ENCODE measurements at regions of chr9 and their contacts with region 1.

Region 1: GRCh38 chr9:2053883-2054845 is 39.0 kb downstream of the SMARCA2 start:
- DNase-seq: peak; percentile 88
- H3K4me3 Mint-ChIP-seq: peak overlapping the region; percentile 34
- H3K27ac Mint-ChIP-seq: peak overlapping the region; percentile 83
- H3K4me1 Mint-ChIP-seq: peaks cover 46% of the 10 kb centered on the region
- H3K27me3 Mint-ChIP-seq: no peaks in the 10 kb centered on the region

Region 2: GRCh38 chr9:1683951-1684350 is 370.2 kb before region 1 on chr9:
- CTCF ChIA-PET with region 1: no interaction called
- POLR2A ChIA-PET with region 1: no interaction called
- intact Hi-C with region 1: no loop called
- DNase-seq: no peak
- H3K4me3 Mint-ChIP-seq: no peak overlapping the region
- H3K27ac Mint-ChIP-seq: no peak overlapping the region
- H3K4me1 Mint-ChIP-seq: no peaks in the 10 kb centered on the region
- H3K27me3 Mint-ChIP-seq: peaks cover 11% of the 10 kb centered on the region

Region 3: DNA sequence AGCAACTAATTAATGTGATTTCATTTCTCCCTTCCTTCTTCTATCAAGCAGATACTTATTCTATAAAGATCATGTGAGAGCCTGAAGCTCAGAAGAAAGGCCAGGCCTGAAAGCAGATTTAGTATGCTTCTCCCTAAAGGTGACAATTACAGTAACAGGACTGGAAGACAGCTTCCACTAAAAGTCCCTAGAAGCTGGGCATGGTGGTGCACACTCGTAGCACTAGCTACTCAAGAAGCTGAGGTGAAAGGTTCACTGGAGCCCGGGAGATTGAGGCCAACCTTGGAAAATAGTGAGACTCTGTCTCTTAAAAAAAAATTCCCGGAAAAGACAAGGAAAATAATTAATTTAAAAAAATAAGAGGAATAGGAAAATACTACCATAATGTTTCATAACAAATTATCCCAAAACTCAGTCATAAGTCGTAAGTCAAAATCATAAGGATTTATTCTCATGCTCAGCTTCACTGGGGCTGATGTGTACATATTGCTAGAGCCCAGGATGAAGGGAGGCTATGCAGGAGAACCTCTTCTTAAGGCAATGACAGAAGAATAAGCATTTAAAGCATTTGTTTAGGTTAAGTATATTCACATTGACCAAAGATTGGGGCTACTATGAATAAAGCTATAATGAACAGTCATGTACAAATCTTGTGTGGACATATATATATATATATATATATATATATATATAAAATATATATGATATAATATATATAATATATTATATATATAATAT is 249.9 kb before region 1 on chr9:
- CTCF ChIA-PET with region 1: no interaction called
- POLR2A ChIA-PET with region 1: no interaction called
- intact Hi-C with region 1: loop called (anchors 5 kb)
- DNase-seq: no peak
- H3K4me3 Mint-ChIP-seq: no peak overlapping the region
- H3K27ac Mint-ChIP-seq: peak overlapping the region; percentile 31
- H3K4me1 Mint-ChIP-seq: peaks cover 7% of the 10 kb centered on the region
- H3K27me3 Mint-ChIP-seq: peaks cover 2% of the 10 kb centered on the region

Region 4: GRCh38 chr9:2014696-2015580 is 39.2 kb before region 1 on chr9 and contains the start of gene SMARCA2:
- CTCF ChIA-PET with region 1: interaction called, 5 read pairs
- POLR2A ChIA-PET with region 1: interaction called, 52 read pairs
- intact Hi-C with region 1: loop called (anchors 1 kb)
- DNase-seq: peak; percentile 98
- H3K4me3 Mint-ChIP-seq: peak within 1 kb of the TSS; percentile 99
- H3K27ac Mint-ChIP-seq: peak within 1 kb of the TSS; percentile 100
- H3K4me1 Mint-ChIP-seq: peaks cover 47% of the 10 kb centered on the region
- H3K27me3 Mint-ChIP-seq: peaks cover 4% of the 10 kb centered on the region
- total RNA-seq, gene SMARCA2: 95.1 to 100 TPM

Region 5: GRCh38 chr9:2023532-2023931 is 30.6 kb before region 1 on chr9:
- CTCF ChIA-PET with region 1: interaction called, 5 read pairs
- POLR2A ChIA-PET with region 1: interaction called, 52 read pairs
- intact Hi-C with region 1: loop called (anchors 1 kb)
- DNase-seq: peak; percentile 53
- H3K4me3 Mint-ChIP-seq: peak overlapping the region; percentile 38
- H3K27ac Mint-ChIP-seq: peak overlapping the region; percentile 86
- H3K4me1 Mint-ChIP-seq: peaks cover 94% of the 10 kb centered on the region
- H3K27me3 Mint-ChIP-seq: no peaks in the 10 kb centered on the region

Region 6: GRCh38 chr9:2066312-2067273 is 12.4 kb after region 1 on chr9:
- CTCF ChIA-PET with region 1: interaction called, 4 read pairs
- POLR2A ChIA-PET with region 1: interaction called, 3 read pairs
- intact Hi-C with region 1: loop called (anchors 1 kb)
- DNase-seq: no peak
- H3K4me3 Mint-ChIP-seq: no peak overlapping the region
- H3K27ac Mint-ChIP-seq: peak overlapping the region; percentile 51
- H3K4me1 Mint-ChIP-seq: peaks cover 24% of the 10 kb centered on the region
- H3K27me3 Mint-ChIP-seq: no peaks in the 10 kb centered on the region

Region 7: DNA sequence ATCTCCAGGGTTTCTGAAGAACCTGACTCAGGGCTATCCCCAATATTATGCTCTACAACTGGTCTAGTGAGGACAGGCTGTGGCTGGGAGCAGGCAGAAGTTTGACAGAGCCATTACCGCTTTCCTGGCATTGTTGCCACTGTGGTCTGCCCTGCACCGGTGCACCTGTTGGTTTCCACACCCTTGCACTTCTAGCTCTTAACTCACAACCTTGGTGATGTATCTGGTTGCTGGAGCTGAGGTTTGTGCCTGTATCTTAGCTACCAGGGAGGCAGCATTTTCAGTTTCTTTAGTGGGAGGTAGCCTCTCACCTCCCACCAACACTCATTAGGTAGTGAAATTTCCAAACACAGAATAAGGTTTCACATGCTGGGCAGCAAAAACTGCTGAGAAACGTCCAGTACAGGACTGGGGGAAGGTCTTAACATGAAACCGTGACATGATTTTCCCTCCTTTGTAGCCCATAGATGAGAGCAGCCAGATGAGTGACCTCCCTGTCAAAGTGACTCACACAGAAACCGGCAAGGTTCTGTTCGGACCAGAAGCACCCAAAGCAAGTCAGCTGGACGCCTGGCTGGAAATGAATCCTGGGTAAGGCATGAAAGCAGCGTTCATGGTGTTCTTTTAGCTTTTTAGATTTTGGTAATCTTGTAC is 18.7 kb after region 1 on chr9:
- CTCF ChIA-PET with region 1: interaction called, 4 read pairs
- POLR2A ChIA-PET with region 1: interaction called, 11 read pairs
- intact Hi-C with region 1: loop called (anchors 2 kb)
- DNase-seq: peak; percentile 48
- H3K4me3 Mint-ChIP-seq: no peak overlapping the region
- H3K27ac Mint-ChIP-seq: peak overlapping the region; percentile 16
- H3K4me1 Mint-ChIP-seq: peaks cover 24% of the 10 kb centered on the region
- H3K27me3 Mint-ChIP-seq: no peaks in the 10 kb centered on the region

Region 8: GRCh38 chr9:2216591-2216990 is 162.4 kb after region 1 on chr9:
- CTCF ChIA-PET with region 1: no interaction called
- POLR2A ChIA-PET with region 1: no interaction called
- intact Hi-C with region 1: no loop called
- DNase-seq: no peak
- H3K4me3 Mint-ChIP-seq: no peak overlapping the region
- H3K27ac Mint-ChIP-seq: no peak overlapping the region
- H3K4me1 Mint-ChIP-seq: no peaks in the 10 kb centered on the region
- H3K27me3 Mint-ChIP-seq: no peaks in the 10 kb centered on the region

Region 9: DNA sequence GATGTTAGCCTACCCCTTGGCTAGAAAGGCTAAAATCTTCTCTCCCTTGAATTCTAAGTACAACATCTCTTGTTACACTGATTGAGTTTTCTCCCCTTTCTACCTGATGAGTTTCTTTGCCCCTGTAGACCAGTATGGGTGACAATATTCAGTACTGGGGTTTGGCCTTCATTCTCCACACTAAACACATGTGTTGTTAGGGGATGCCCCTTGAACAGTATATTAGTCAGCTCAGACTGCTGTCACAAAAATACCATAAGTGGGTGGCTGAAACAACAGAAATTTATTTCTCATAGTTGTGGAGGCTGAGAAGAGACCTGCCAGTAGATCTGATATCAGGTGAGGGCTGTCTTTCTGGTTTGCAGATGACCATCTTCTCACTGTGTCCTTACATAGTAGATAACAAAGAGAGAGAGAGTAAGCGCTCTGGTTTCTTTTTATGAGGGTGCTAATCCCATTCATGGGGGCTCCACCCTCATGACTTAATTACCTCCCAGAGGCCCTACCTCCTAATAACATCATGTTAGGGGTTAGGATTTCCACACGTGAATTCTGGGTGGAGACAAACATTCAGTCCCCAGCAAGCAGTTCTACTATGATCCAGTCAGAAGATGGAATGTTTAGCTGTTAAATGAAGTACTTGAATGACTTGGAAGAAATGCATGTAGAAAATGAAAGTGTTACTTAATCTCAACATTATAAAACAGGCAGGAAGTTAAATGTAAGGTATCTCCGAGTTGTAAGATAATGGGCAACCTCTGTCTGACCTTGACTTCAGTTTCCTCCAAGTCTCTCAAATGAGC is 584.9 kb after region 1 on chr9:
- CTCF ChIA-PET with region 1: no interaction called
- POLR2A ChIA-PET with region 1: no interaction called
- intact Hi-C with region 1: loop called (anchors 5 kb)
- DNase-seq: no peak
- H3K4me3 Mint-ChIP-seq: no peak overlapping the region
- H3K27ac Mint-ChIP-seq: peak overlapping the region; percentile 26
- H3K4me1 Mint-ChIP-seq: peaks cover 13% of the 10 kb centered on the region
- H3K27me3 Mint-ChIP-seq: peaks cover 1% of the 10 kb centered on the region

Measured in activated CD4-positive, alpha-beta memory T cell treated with anti-CD3 and anti-CD28 coated beads for 36 hours (primary cell).